Activated T-helper 2 cell treated with anti-CD3 and anti-CD28 coated beads, Interferon-gamma antibody, Interleukin-2, Interleukin-4, amounts not matched to agents 10 μg/mL and 5 μg/mL and 100 μg/mL, durations not matched to agents 14 hours and 24 hours and 36 hours (primary cell): ENCODE measurements at regions of chr4 and their contacts with region 1.

Region 1: DNA sequence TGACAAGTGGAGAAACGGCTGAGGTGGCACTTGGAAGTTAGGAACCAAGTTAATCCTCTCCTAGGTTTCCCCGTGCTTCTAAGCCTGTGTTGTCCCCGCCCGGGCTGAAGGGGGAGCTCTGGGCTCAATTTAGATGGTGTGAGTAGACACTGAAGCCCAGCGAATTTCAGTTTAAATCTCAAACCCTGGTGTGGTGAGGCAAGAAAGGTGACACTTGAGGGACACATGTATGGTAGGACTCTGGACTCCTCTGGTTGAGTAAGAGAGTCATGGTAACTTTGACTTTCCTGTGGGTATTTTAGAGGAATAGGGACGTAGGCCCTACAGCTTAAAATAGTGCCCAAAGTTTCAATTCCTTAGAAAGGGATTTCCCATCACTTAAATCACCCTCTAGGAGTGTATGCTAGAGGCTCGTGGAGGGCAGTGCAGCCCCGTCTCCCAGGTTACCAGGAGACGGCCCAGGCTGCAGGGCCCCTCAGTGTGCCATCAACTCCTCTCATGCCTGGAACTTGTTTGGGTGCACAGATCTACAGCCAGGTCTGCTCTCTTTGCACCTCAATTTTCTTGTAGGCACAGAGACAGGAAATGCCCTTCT is 24.0 kb downstream of the HAND2 start:
- DNase-seq: no peak
- H3K4me3 Mint-ChIP-seq: no peak overlapping the region
- H3K27ac Mint-ChIP-seq: no peak overlapping the region
- H3K4me1 Mint-ChIP-seq: peaks cover 9% of the 10 kb centered on the region
- H3K27me3 Mint-ChIP-seq: peaks cover 84% of the 10 kb centered on the region

Region 2: DNA sequence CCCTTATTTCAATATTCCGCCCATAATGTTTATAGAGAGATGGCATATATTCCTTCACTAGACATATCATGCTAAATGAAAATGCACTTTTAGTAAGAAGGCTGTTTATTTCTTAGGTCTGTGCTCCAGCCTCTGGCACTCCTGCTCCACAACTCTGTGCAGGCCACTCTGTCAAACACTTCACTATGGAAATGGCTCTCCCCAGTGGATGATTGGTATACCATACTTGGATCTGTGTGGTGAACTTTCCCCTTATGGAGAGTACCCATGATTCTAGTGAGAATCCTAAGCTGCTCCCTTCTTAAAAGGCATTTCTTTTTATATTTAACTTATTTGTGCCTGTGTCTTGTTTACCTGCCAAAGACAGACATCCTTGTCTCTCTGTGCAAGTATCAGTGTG is 817.5 kb before region 1 on chr4:
- intact Hi-C with region 1: no loop called
- DNase-seq: no peak
- H3K4me3 Mint-ChIP-seq: no peak overlapping the region
- H3K27ac Mint-ChIP-seq: no peak overlapping the region
- H3K4me1 Mint-ChIP-seq: no peaks in the 10 kb centered on the region
- H3K27me3 Mint-ChIP-seq: no peaks in the 10 kb centered on the region

Region 3: GRCh38 chr4:173301518-173302201 is 204.4 kb before region 1 on chr4:
- intact Hi-C with region 1: no loop called
- DNase-seq: no peak
- H3K4me3 Mint-ChIP-seq: no peak overlapping the region
- H3K27ac Mint-ChIP-seq: no peak overlapping the region
- H3K4me1 Mint-ChIP-seq: peaks cover 4% of the 10 kb centered on the region
- H3K27me3 Mint-ChIP-seq: no peaks in the 10 kb centered on the region

Region 4: DNA sequence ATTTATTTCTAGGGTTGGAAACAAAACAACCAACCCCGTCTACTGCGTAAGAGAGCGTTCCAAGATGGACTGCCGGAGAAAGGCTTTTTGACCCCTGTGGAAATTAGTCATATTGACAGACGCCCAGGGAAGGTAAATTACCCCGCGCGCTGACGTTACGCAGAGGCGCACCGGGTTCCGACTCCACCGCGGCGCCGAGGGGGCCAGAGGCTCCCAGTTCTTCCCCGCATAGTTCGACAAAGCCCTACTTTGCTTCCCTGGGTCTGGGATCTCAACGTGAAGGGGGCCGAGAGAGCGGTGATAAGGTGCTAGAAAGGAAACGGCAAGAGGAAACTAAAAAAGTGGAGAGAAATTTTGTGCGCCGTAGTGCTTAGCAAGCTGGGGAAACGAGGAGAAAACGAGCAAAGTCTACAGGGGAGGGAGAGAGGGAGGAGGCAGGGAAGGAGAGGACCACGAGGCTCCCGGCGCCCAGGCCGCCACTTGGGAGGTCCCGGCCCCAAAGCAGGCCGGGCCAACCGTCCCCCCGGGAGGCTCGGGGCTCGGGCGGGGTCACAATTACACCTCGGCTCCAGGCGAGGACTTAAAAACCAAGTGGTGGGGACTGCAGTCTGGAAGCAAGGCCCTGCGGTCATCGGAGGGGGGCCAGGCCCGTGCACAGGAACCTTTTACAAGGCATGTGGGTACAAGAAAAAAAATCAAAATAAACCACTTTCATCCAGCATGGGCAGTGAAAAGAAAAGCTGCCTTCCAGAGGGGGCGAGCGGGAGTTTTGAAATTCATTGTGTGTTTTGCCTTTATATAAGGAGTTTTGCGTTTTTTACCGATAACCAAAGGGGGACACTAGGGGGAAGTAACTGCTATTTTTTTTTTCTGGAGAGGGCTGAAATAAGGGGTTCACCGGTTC is 10.9 kb after region 1 on chr4:
- intact Hi-C with region 1: loop called (anchors 1 kb)
- DNase-seq: no peak
- H3K4me3 Mint-ChIP-seq: no peak overlapping the region
- H3K27ac Mint-ChIP-seq: no peak overlapping the region
- H3K4me1 Mint-ChIP-seq: no peaks in the 10 kb centered on the region
- H3K27me3 Mint-ChIP-seq: peaks cover 92% of the 10 kb centered on the region

Region 5: GRCh38 chr4:173522123-173522950 is 16.3 kb after region 1 on chr4:
- intact Hi-C with region 1: loop called (anchors 1 kb)
- DNase-seq: no peak
- H3K4me3 Mint-ChIP-seq: no peak overlapping the region
- H3K27ac Mint-ChIP-seq: no peak overlapping the region
- H3K4me1 Mint-ChIP-seq: no peaks in the 10 kb centered on the region
- H3K27me3 Mint-ChIP-seq: peaks cover 91% of the 10 kb centered on the region